HEK293 (cell line): ENCODE measurements at regions of chrX and their contacts with region 1.

Region 1: DNA sequence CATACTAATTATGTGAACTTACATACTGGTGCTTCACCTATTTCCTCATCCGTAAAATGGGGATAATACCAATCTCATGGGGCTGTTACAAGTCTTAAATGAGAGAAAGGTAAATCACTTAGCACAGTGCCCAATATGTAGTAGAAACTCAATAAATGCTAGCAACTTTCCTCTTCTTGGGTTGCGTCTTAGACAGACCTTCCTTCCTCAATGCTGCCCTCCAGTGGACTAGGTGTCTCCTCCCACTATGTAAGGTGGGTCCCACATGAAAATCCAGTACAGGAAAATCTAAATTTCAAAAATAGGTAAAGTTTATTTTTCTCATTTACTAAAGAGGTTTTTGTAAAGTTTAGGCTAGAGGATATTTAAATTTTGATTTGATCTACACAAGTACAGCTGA is 20.6 kb downstream of the ZDHHC9 start:
- H3K4me3 ChIP-seq: no peak overlapping the region
- H3K27ac ChIP-seq: no peak overlapping the region
- H3K4me1 ChIP-seq: no peaks in the 10 kb centered on the region
- CTCF ChIP-seq: 0 out of 2 replicates have a peak, but pooled peaks have one; percentile 24

Region 2: GRCh38 chrX:129759576-129760061 is 63.5 kb before region 1 on chrX:
- CTCF ChIA-PET with region 1: no interaction called
- POLR2A ChIA-PET with region 1: no interaction called
- H3K4me3 ChIP-seq: no peak overlapping the region
- H3K27ac ChIP-seq: no peak overlapping the region
- H3K4me1 ChIP-seq: no peaks in the 10 kb centered on the region
- CTCF ChIP-seq: no peak

Region 3: GRCh38 chrX:129833152-129833990 is 10.3 kb after region 1 on chrX:
- CTCF ChIA-PET with region 1: interaction called, 15 read pairs
- POLR2A ChIA-PET with region 1: no interaction called
- H3K4me3 ChIP-seq: no peak overlapping the region
- H3K27ac ChIP-seq: no peak overlapping the region
- H3K4me1 ChIP-seq: no peaks in the 10 kb centered on the region
- CTCF ChIP-seq: no peak

Region 4: DNA sequence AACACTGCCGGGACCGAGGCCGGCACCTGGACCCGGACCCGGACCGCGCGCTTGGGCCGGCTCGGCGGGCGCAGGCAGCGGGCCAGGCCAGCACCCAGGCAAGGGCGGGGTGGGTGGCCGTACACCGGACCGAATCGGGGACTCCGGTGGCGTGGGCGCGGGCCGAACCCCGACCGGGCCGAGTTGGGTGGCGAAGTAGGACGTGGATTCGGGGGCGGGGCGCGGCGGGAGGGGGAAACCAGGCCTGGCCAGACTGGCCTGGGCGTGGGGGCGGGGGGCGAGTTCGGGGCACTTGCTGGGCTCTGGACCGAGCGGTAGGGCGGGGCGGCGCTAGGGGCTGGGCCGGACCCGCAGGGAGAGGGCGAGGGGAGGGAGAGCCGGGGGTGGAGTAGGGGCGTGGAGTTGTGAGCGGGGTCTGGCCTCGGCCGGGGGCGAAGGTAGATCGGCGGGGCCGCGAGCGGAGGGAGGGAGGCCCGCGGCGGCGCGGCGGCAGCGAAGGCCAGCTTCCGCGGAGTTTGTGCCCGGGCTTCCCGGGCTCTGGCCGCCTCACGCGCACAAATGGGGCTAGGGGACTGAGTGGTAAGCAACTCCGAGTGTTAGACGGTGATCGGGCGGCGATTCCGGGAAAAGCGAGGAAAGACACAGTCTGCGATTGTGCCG is 157.6 kb after region 1 on chrX:
- CTCF ChIA-PET with region 1: no interaction called
- POLR2A ChIA-PET with region 1: no interaction called
- H3K4me3 ChIP-seq: peak overlapping the region; percentile 43
- H3K27ac ChIP-seq: peak overlapping the region; percentile 41; the same call in 1 of the 2 replicates
- H3K4me1 ChIP-seq: peaks cover 6% of the 10 kb centered on the region; the same call in 1 of the 2 replicates
- CTCF ChIP-seq: no peak